ENCODE measurements at regions of chr20 and their contacts with region 1.

Region 1: GRCh38 chr20:48620519-48621254 is 207.1 kb downstream of the PREX1 start:
- DNase-seq: peak; percentile 90
- H3K4me3 ChIP-seq: peak overlapping the region; percentile 33 to 52; a peak in 3 of 4 replicates
- H3K27ac ChIP-seq: peak overlapping the region in 1 of 2 experiments; percentile 83; a peak in 2 of 4 replicates
- H3K4me1 ChIP-seq: peaks cover 0 to 27% of the 10 kb centered on the region in 2 experiments; a peak in 2 of 4 replicates
- H3K27me3 ChIP-seq: no peaks in the 10 kb centered on the region
- CTCF ChIP-seq: peak; percentile 82
- EP300 ChIP-seq: no peak
- RAD21 ChIP-seq: peak; percentile 97

Region 2: DNA sequence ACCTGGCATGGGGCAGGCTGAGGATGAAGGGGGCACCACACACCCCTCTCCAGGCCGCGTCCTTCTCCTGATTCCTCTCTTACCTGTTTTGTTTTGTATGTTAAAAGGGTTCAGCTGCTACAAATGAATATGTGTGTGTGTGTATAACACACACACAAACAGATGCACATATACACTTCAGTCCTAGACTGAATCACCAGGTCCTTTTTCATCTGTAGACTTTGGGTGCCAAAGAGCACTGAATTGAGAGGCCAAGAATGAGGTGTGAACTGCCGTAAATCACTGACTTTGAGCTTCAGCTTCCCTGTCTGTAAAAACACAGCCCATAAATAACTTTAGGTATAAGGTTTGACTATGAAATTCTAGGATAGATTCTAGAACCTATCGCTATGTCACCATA is 875.9 kb before region 1 on chr20:
- CTCF ChIA-PET with region 1: interaction called, 13 read pairs
- POLR2A ChIA-PET with region 1: no interaction called
- DNase-seq: no peak
- H3K4me3 ChIP-seq: no peak overlapping the region
- H3K27ac ChIP-seq: no peak overlapping the region
- H3K4me1 ChIP-seq: peaks cover 0 to 7% of the 10 kb centered on the region in 2 experiments; a peak in 1 of 4 replicates
- H3K27me3 ChIP-seq: no peaks in the 10 kb centered on the region
- CTCF ChIP-seq: no peak
- EP300 ChIP-seq: no peak
- RAD21 ChIP-seq: no peak

Region 3: DNA sequence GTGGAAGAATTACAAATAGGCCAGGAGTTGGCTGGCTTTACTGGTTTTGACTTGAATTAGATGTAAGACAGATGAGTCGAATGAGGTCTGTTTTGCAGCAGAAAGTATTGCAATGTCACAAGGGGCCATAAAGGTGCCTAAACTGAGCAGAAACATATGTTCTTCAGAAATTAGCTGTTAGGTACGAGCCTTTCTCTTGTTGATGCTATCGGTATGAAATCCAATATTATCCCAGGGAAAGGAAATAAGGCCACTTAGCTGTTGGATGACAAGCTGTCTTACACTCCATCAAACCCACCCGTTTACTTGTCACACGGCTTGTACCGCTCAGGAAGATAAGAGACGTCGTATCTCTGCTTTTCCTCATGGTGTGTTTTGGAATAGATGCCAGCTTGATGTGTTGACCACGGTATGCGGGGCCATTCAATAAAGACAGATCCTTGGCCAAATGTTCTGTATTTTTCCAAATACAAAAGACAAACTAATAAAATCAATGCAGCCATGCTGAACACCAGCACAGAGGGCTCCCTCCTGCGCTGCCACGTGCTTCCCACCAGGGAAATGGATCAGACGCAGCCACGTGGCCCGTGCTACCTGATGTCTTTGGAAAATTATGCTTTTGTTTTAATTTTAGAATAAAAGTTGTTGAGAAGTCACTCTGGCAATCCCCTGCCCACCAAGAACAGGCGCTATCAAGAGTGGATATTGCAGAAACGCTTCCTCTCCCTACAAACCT is 579.5 kb before region 1 on chr20:
- CTCF ChIA-PET with region 1: interaction called, 30 read pairs
- POLR2A ChIA-PET with region 1: no interaction called
- DNase-seq: peak; percentile 70
- H3K4me3 ChIP-seq: no peak overlapping the region
- H3K27ac ChIP-seq: peak overlapping the region in 1 of 2 experiments; percentile 86; a peak in 2 of 4 replicates
- H3K4me1 ChIP-seq: peaks cover 0 to 14% of the 10 kb centered on the region in 2 experiments; a peak in 1 of 4 replicates
- H3K27me3 ChIP-seq: no peaks in the 10 kb centered on the region
- CTCF ChIP-seq: no peak
- EP300 ChIP-seq: peak in 1 of 2 experiments; percentile 65; a peak in 1 of 4 replicates
- RAD21 ChIP-seq: no peak; the same call in 1 of the 2 replicates

Region 4: GRCh38 chr20:48329635-48330277 is 290.9 kb before region 1 on chr20:
- CTCF ChIA-PET with region 1: interaction called, 11 read pairs
- POLR2A ChIA-PET with region 1: no interaction called
- DNase-seq: peak; percentile 78
- H3K4me3 ChIP-seq: no peak overlapping the region
- H3K27ac ChIP-seq: peak overlapping the region in 1 of 2 experiments; percentile 68; a peak in 2 of 4 replicates
- H3K4me1 ChIP-seq: peaks cover 7 to 8% of the 10 kb centered on the region in 2 experiments; a peak in 3 of 4 replicates
- H3K27me3 ChIP-seq: no peaks in the 10 kb centered on the region
- CTCF ChIP-seq: peak; percentile 50
- EP300 ChIP-seq: no peak
- RAD21 ChIP-seq: peak; percentile 62

Region 5: GRCh38 chr20:48471759-48472533 is 148.7 kb before region 1 on chr20:
- CTCF ChIA-PET with region 1: interaction called, 11 read pairs
- POLR2A ChIA-PET with region 1: no interaction called
- DNase-seq: no peak
- H3K4me3 ChIP-seq: no peak overlapping the region
- H3K27ac ChIP-seq: no peak overlapping the region
- H3K4me1 ChIP-seq: no peaks in the 10 kb centered on the region
- H3K27me3 ChIP-seq: no peaks in the 10 kb centered on the region; the same call in 1 of the 2 replicates
- CTCF ChIP-seq: no peak
- EP300 ChIP-seq: no peak
- RAD21 ChIP-seq: no peak

Region 6: GRCh38 chr20:48594549-48594948 is 26.1 kb before region 1 on chr20:
- CTCF ChIA-PET with region 1: no interaction called
- POLR2A ChIA-PET with region 1: no interaction called
- DNase-seq: no peak
- H3K4me3 ChIP-seq: no peak overlapping the region
- H3K27ac ChIP-seq: no peak overlapping the region
- H3K4me1 ChIP-seq: no peaks in the 10 kb centered on the region
- H3K27me3 ChIP-seq: no peaks in the 10 kb centered on the region
- CTCF ChIP-seq: no peak
- EP300 ChIP-seq: no peak
- RAD21 ChIP-seq: no peak

Region 7: DNA sequence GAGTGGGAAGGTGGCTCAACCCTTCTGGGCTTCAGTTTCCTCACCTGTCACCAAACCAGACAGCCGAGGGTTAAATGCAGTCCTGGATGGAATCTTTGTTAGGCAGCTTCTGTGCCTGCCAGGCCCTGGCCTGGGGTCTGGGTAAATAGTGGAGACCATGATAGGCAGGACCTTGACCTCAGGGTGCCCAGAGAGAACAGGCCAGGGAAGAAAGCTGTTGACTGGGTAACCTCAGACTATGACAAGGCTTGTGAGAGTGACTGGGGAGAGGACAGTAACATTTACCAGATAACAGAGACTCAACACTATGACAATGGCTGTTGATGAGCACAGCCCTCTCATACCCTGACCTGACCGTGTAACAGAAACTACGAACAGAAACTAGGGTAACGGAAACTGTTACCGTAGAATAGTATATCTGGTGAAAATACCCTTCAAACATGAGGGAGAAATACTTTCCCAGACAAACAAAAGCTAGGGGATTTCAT is 11.2 kb before region 1 on chr20:
- CTCF ChIA-PET with region 1: interaction called, 27 read pairs
- POLR2A ChIA-PET with region 1: no interaction called
- DNase-seq: no peak
- H3K4me3 ChIP-seq: no peak overlapping the region
- H3K27ac ChIP-seq: no peak overlapping the region
- H3K4me1 ChIP-seq: peaks cover 0 to 12% of the 10 kb centered on the region in 2 experiments; a peak in 1 of 4 replicates
- H3K27me3 ChIP-seq: no peaks in the 10 kb centered on the region
- CTCF ChIP-seq: no peak
- EP300 ChIP-seq: no peak
- RAD21 ChIP-seq: no peak

Region 8: DNA sequence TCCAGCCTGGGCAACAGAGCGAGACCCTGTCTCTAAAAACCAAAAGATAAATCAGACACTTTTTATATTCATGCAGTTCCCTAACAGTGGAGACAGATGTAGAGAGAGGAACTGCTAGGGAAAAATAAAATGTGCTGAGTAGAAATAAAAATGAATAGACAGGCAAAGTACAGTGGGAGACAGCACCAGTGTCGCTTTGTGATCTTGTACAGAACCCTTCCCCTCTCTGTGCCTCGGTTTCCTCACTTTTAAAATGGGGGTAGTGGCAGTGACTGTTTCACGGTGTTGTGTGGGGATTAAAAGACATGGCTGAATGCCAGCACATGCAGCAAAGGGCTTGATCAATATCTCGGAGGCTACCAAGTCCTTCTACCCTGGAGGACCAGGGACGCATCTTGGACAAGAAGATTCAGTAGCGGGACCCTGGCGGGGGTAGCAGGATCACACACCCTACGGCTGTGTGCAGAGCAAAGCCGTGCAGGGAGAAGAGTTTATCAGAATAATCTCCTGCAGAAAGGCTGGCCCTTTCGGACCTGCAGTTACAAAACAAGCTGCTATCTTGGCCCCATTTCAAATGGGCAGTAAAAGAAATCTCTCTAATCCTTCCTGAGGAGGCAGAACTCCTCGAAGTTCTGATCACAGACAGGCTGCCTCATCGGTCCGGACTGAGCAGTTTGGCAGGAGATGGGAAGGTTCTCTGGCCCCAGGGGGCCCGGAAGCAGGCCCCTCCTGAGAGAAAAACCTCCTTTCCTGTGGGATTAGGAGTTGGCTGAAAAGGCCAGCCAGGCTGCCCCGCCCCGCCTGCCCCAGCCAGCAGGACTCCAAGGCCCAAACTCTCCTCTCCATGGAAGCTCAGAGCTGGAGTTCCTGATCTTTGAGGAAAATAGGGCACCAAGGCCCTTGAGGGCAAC is 65.4 kb after region 1 on chr20:
- CTCF ChIA-PET with region 1: no interaction called
- POLR2A ChIA-PET with region 1: no interaction called
- DNase-seq: peak; percentile 53
- H3K4me3 ChIP-seq: no peak overlapping the region
- H3K27ac ChIP-seq: peak overlapping the region; percentile 29 to 68; a peak in 3 of 4 replicates
- H3K4me1 ChIP-seq: peaks cover 52 to 62% of the 10 kb centered on the region in 2 experiments
- H3K27me3 ChIP-seq: no peaks in the 10 kb centered on the region
- CTCF ChIP-seq: no peak
- EP300 ChIP-seq: peak in 1 of 2 experiments; percentile 34; a peak in 1 of 4 replicates
- RAD21 ChIP-seq: no peak

Region 9: GRCh38 chr20:48782053-48782452 is 161.4 kb after region 1 on chr20:
- CTCF ChIA-PET with region 1: no interaction called
- POLR2A ChIA-PET with region 1: no interaction called
- DNase-seq: no peak
- H3K4me3 ChIP-seq: no peak overlapping the region
- H3K27ac ChIP-seq: no peak overlapping the region
- H3K4me1 ChIP-seq: peaks cover 0 to 15% of the 10 kb centered on the region in 2 experiments; a peak in 1 of 4 replicates
- H3K27me3 ChIP-seq: no peaks in the 10 kb centered on the region
- CTCF ChIP-seq: no peak
- EP300 ChIP-seq: no peak
- RAD21 ChIP-seq: no peak

Measured in SK-N-SH (cell line).